ENCODE measurements at regions of chr12 and their contacts with region 1.

Region 1: GRCh38 chr12:4037747-4038312 is 164.6 kb upstream of the PARP11 start:
- DNase-seq: peak; percentile 35 to 77
- H3K4me3 ChIP-seq: no peak overlapping the region
- H3K27ac ChIP-seq: no peak overlapping the region
- H3K4me1 ChIP-seq: no peaks in the 10 kb centered on the region
- H3K27me3 ChIP-seq: no peaks in the 10 kb centered on the region
- CTCF ChIP-seq: peak in 5 of 7 experiments; percentile 52 to 73 (median 64)
- EP300 ChIP-seq: no peak
- POLR2A ChIP-seq: no peak

Region 2: DNA sequence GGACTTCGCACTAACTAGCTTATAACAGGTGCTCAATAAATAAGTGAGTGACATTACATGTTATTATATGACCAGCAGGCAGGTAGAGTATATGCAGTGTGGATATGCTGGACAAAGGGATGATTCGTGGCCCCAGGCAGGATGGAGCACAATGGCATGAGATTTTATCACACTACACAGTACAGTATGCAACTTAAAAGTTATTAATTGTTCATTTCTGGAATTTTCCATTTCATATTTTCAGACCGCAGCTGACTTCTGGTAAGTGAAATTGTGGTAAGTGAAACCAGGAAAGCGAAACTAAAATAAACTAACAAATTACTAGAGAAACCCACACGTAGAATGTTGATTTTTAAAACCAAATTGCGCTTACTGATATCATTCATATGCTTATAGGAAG is 168.0 kb before region 1 on chr12:
- intact Hi-C with region 1: no loop called
- DNase-seq: no peak
- H3K4me3 ChIP-seq: no peak overlapping the region
- H3K27ac ChIP-seq: peak overlapping the region in 1 of 5 donors; percentile 50
- H3K4me1 ChIP-seq: peaks cover 12 to 41% (median 18%) of the 10 kb centered on the region in 4 donors
- H3K27me3 ChIP-seq: no peaks in the 10 kb centered on the region
- CTCF ChIP-seq: no peak
- EP300 ChIP-seq: no peak
- POLR2A ChIP-seq: no peak

Region 3: DNA sequence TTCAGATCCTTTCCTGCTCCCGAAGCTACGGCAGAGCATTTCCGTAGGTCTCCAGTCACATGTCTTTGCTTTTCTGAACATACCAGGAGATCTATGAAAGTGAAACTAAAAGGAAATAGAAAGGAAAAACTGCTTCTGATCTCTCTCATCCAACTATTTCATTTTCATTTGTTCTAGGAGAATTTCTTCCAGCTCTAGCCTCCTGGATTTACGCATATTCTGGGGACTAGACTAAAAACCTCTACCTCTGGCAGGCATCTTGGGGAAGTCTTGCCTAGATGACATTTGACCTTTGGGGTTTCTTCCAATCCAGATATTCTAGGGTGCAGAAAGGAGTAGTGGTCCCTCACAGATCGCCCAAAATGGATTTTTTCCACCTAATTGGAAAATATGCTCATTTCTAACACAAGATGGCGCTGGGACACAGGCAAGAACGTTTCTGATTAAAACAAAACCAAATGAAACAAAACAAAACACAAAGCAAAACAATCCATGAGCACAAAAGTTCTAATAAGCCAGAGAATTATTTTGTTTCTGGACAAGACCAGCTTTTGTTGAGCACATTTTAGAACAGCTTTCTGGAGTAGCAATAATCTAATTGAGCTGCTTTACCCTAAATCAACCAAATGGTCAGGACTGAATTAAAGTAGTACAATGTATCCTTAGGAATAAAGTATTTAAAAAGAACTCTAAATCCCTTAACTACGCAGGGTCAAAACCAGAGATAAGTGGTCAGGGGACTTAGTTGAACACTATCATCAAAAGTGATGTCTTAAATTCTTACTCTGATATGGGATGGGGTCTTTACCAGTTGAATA is 152.3 kb before region 1 on chr12:
- intact Hi-C with region 1: loop called (anchors 5 kb)
- DNase-seq: peak in 1 of 2 donors; percentile 84
- H3K4me3 ChIP-seq: peak overlapping the region; percentile 19 to 32 (median 26)
- H3K27ac ChIP-seq: peak overlapping the region; percentile 26 to 77 (median 67)
- H3K4me1 ChIP-seq: peaks cover 0 to 7% (median 0%) of the 10 kb centered on the region in 4 donors
- H3K27me3 ChIP-seq: peaks cover 0 to 24% (median 0%) of the 10 kb centered on the region in 3 donors
- CTCF ChIP-seq: peak in 5 of 7 experiments; percentile 54 to 80 (median 68)
- EP300 ChIP-seq: no peak
- POLR2A ChIP-seq: no peak

Region 4: DNA sequence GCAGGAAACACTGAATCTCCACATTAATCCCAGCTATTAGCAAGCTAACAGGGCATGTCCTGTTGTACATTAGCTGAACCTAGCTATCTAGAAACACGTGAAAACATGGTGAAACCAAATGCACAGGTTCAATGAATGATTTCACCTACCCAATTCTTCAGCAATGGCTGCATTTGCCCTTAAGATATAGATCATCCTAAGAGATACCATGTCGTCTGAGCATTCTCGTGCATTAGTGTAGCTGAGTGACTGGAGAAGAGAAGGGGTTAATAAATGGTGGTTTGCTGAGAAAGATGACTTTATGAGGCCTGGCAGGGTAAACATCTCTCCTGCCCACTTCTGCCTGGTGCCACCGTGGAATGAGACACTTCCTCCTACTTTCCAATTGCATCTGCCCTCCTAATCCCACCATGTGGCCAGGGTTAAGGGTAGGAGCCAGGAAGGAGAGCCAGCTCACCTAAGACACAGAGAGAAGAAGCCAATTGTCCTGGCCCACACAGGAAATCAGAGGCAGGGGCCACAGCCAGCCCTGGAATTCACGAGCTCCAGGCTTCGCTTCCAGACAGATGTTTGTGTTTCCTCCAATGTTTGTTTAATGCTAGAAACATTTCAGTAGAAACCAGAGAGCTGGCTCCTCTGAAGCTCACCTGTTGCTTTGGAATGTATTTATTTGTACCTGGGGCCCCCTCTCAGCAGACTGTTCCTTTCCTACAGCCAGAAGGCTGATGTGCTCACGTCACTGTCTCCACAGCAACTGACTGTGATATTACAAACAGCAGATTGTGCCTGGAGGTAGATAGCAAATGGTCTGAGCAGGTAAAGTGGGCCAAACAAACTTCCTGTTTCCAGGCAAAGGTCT is 38.6 kb before region 1 on chr12:
- intact Hi-C with region 1: loop called (anchors 2 kb)
- DNase-seq: peak; percentile 64 to 95
- H3K4me3 ChIP-seq: no peak overlapping the region
- H3K27ac ChIP-seq: peak overlapping the region in 2 of 5 donors; percentile 34 to 50
- H3K4me1 ChIP-seq: peaks cover 0 to 9% (median 0%) of the 10 kb centered on the region in 4 donors
- H3K27me3 ChIP-seq: no peaks in the 10 kb centered on the region
- CTCF ChIP-seq: no peak
- EP300 ChIP-seq: no peak
- POLR2A ChIP-seq: no peak